ENCODE measurements at regions of chr19 and their contacts with region 1.

Region 1: GRCh38 chr19:1241417-1242095 is at the start of gene ATP5F1D:
- DNase-seq: peak; percentile 78 to 97 (median 92)
- ATAC-seq: peak; percentile 60
- H3K4me3 ChIP-seq: peak within 1 kb of the TSS; percentile 48 to 71
- H3K4me3 Mint-ChIP-seq: peak within 1 kb of the TSS; percentile 88
- H3K27ac ChIP-seq: peak within 1 kb of the TSS; percentile 12 to 25
- H3K27ac Mint-ChIP-seq: peak within 1 kb of the TSS; percentile 90
- H3K4me1 ChIP-seq: peaks cover 58% of the 10 kb centered on the region
- H3K4me1 Mint-ChIP-seq: peaks cover 42% of the 10 kb centered on the region
- H3K27me3 ChIP-seq: peaks cover 0 to 11% of the 10 kb centered on the region in 2 experiments
- H3K27me3 Mint-ChIP-seq: peaks cover 6% of the 10 kb centered on the region
- CTCF ChIP-seq: no peak
- total RNA-seq, gene ATP5F1D: 86.2 to 96.3 TPM

Region 2: DNA sequence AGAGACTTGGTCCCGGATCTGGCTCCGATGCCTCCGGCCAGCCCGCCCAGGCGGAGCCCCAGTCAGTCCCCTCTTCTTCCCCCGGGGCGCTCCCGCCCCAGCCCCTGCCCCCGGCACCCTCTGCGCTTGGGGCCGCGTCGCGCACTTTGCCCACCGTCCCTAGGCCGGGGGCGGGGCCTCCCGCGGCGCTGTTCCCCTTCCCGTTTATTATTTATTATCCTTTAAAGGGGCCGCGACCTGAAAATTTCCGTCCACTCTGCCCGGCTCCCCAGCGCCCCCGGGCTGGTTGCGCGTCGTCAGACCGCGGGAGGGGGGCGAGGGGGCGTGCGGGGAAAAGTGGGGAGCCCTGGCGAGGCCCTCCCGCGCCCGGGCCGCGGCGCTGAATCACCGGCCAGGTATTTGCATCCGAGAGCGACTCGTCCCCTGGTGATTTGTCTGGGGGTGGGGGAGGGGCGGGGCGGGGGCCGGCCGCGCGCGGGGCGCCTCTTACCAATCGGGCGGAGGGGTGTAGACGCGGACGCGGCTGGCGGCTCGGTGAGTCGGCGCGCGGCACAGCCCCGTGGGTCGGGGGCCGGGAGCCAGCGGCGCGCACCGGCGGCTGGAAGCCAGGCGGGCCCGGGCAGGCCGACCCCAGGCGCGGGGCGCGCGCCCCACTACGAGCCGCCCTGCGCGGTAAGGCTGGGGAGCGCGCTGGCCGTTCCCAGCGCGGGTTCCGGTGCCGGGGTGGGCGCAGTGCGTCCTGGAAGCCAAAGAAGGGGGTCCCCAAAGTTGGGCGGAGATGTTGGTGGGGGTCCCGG is 315.8 kb before region 1 on chr19 and contains the start of gene ARID3A:
- CTCF ChIA-PET with region 1: interaction called, 4 read pairs
- POLR2A ChIA-PET with region 1: no interaction called
- intact Hi-C with region 1: loop called (anchors 1 kb)
- DNase-seq: peak in 8 of 9 experiments; percentile 62 to 88 (median 76)
- ATAC-seq: peak; percentile 67
- H3K4me3 ChIP-seq: peak within 1 kb of the TSS; percentile 73 to 78
- H3K4me3 Mint-ChIP-seq: peak within 1 kb of the TSS; percentile 80
- H3K27ac ChIP-seq: peak within 1 kb of the TSS; percentile 42 to 74
- H3K27ac Mint-ChIP-seq: no peak within 1 kb of the TSS
- H3K4me1 ChIP-seq: peaks cover 20% of the 10 kb centered on the region
- H3K4me1 Mint-ChIP-seq: peaks cover 17% of the 10 kb centered on the region
- H3K27me3 ChIP-seq: no peaks in the 10 kb centered on the region
- H3K27me3 Mint-ChIP-seq: no peaks in the 10 kb centered on the region
- CTCF ChIP-seq: no peak
- total RNA-seq, gene ARID3A: 2.0 to 2.7 TPM

Region 3: GRCh38 chr19:1020868-1021425 is 220.6 kb before region 1 on chr19 and contains the start of gene TMEM259:
- CTCF ChIA-PET with region 1: interaction called, 4 read pairs
- POLR2A ChIA-PET with region 1: no interaction called
- intact Hi-C with region 1: loop called (anchors 1 to 5 kb)
- DNase-seq: peak; percentile 94 to 98 (median 98)
- ATAC-seq: peak; percentile 86
- H3K4me3 ChIP-seq: peak within 1 kb of the TSS; percentile 89 to 94
- H3K4me3 Mint-ChIP-seq: peak within 1 kb of the TSS; percentile 90
- H3K27ac ChIP-seq: peak within 1 kb of the TSS; percentile 97 to 99
- H3K27ac Mint-ChIP-seq: peak within 1 kb of the TSS; percentile 100
- H3K4me1 ChIP-seq: peaks cover 43% of the 10 kb centered on the region
- H3K4me1 Mint-ChIP-seq: peaks cover 45% of the 10 kb centered on the region
- H3K27me3 ChIP-seq: no peaks in the 10 kb centered on the region
- H3K27me3 Mint-ChIP-seq: no peaks in the 10 kb centered on the region
- CTCF ChIP-seq: no peak
- total RNA-seq, gene TMEM259: 408 to 443 TPM

Region 4: GRCh38 chr19:1131738-1132551 is 109.6 kb before region 1 on chr19:
- CTCF ChIA-PET with region 1: interaction called, 4 read pairs
- POLR2A ChIA-PET with region 1: no interaction called
- intact Hi-C with region 1: loop called in 1 of 2 experiments (anchors 1 kb)
- DNase-seq: peak; percentile 54 to 93 (median 86)
- ATAC-seq: peak; percentile 66
- H3K4me3 ChIP-seq: peak overlapping the region; percentile 83 to 96
- H3K4me3 Mint-ChIP-seq: peak overlapping the region; percentile 84
- H3K27ac ChIP-seq: peak overlapping the region; percentile 81 to 89
- H3K27ac Mint-ChIP-seq: peak overlapping the region; percentile 92
- H3K4me1 ChIP-seq: peaks cover 46% of the 10 kb centered on the region
- H3K4me1 Mint-ChIP-seq: peaks cover 29% of the 10 kb centered on the region
- H3K27me3 ChIP-seq: no peaks in the 10 kb centered on the region
- H3K27me3 Mint-ChIP-seq: no peaks in the 10 kb centered on the region
- CTCF ChIP-seq: no peak

Region 5: GRCh38 chr19:1205114-1206062 is 36.2 kb before region 1 on chr19 and contains the start of gene STK11:
- CTCF ChIA-PET with region 1: interaction called, 5 read pairs
- POLR2A ChIA-PET with region 1: no interaction called
- intact Hi-C with region 1: loop called (anchors 1 kb)
- DNase-seq: peak; percentile 98 to 100 (median 99)
- ATAC-seq: peak; percentile 93
- H3K4me3 ChIP-seq: peak within 1 kb of the TSS; percentile 78 to 79
- H3K4me3 Mint-ChIP-seq: peak within 1 kb of the TSS; percentile 92
- H3K27ac ChIP-seq: peak within 1 kb of the TSS; percentile 51 to 62
- H3K27ac Mint-ChIP-seq: peak within 1 kb of the TSS; percentile 85
- H3K4me1 ChIP-seq: peaks cover 50% of the 10 kb centered on the region
- H3K4me1 Mint-ChIP-seq: peaks cover 43% of the 10 kb centered on the region
- H3K27me3 ChIP-seq: no peaks in the 10 kb centered on the region
- H3K27me3 Mint-ChIP-seq: no peaks in the 10 kb centered on the region
- CTCF ChIP-seq: no peak
- total RNA-seq, gene STK11: 38.0 to 43.4 TPM

Region 6: DNA sequence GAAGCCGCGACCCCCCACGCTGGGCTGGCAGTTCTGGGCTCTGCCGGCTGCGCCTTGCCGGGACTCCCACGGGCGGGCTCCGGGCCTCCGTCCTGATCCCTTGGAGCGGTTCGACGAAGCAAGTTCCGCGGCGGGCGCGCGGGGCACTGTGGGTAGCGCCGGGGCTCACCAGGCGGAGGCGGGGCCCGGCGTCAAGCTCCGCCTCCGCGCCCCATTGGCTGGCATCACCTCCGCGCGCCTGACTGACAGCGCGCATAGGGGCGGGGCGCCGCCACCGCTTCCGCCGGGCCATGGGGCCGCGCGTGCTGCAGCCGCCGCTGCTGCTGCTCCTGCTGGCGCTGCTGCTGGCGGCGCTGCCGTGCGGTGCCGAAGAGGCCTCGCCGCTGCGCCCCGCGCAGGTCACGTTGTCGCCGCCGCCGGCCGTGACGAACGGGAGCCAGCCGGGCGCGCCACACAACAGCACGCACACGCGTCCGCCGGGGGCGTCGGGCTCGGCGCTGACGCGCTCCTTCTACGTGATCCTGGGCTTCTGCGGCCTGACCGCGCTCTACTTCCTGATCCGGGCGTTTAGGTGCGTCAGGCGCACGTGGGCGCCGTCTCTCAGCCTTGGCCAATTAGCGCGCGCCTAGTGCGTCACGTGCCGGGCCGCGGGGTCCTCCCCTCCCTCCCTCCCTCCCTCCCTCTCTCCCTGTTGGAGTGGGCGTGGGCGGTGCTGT is 33.9 kb after region 1 on chr19 and contains the start of gene FAM174C:
- CTCF ChIA-PET with region 1: interaction called, 48 read pairs
- POLR2A ChIA-PET with region 1: interaction called, 21 read pairs
- intact Hi-C with region 1: no loop called
- DNase-seq: peak; percentile 88 to 99 (median 95)
- ATAC-seq: peak; percentile 75
- H3K4me3 ChIP-seq: peak within 1 kb of the TSS; percentile 77 to 79
- H3K4me3 Mint-ChIP-seq: peak within 1 kb of the TSS; percentile 83
- H3K27ac ChIP-seq: peak within 1 kb of the TSS; percentile 84 to 94
- H3K27ac Mint-ChIP-seq: peak within 1 kb of the TSS; percentile 92
- H3K4me1 ChIP-seq: peaks cover 61% of the 10 kb centered on the region
- H3K4me1 Mint-ChIP-seq: peaks cover 52% of the 10 kb centered on the region
- H3K27me3 ChIP-seq: no peaks in the 10 kb centered on the region
- H3K27me3 Mint-ChIP-seq: no peaks in the 10 kb centered on the region
- CTCF ChIP-seq: no peak
- total RNA-seq, gene FAM174C: 36.2 to 37.4 TPM

Measured in CD8-positive, alpha-beta T cell (primary cell).